ENCODE measurements at regions of chrX and their contacts with region 1.

Region 1: GRCh38 chrX:37825209-37825842 is 22.0 kb downstream of the DYNLT3 start:
- DNase-seq: peak; percentile 33
- H3K4me3 ChIP-seq: no peak overlapping the region
- H3K27ac ChIP-seq: no peak overlapping the region
- H3K4me1 ChIP-seq: no peaks in the 10 kb centered on the region
- H3K27me3 ChIP-seq: no peaks in the 10 kb centered on the region
- CTCF ChIP-seq: peak; percentile 59
- POLR2A ChIP-seq: no peak

Region 2: GRCh38 chrX:37302569-37302968 is 522.8 kb before region 1 on chrX:
- CTCF ChIA-PET with region 1: interaction called, 3 read pairs
- POLR2A ChIA-PET with region 1: no interaction called
- dilution Hi-C with region 1: no loop called
- intact Hi-C with region 1: loop called (anchors 1 kb)
- DNase-seq: peak; percentile 43
- H3K4me3 ChIP-seq: no peak overlapping the region
- H3K27ac ChIP-seq: no peak overlapping the region
- H3K4me1 ChIP-seq: no peaks in the 10 kb centered on the region
- H3K27me3 ChIP-seq: no peaks in the 10 kb centered on the region
- CTCF ChIP-seq: peak; percentile 32 to 47
- POLR2A ChIP-seq: no peak

Region 3: GRCh38 chrX:37578045-37578444 is 247.3 kb before region 1 on chrX:
- CTCF ChIA-PET with region 1: no interaction called
- POLR2A ChIA-PET with region 1: no interaction called
- dilution Hi-C with region 1: no loop called
- intact Hi-C with region 1: loop called (anchors 5 kb)
- DNase-seq: no peak
- H3K4me3 ChIP-seq: no peak overlapping the region
- H3K27ac ChIP-seq: no peak overlapping the region
- H3K4me1 ChIP-seq: no peaks in the 10 kb centered on the region
- H3K27me3 ChIP-seq: no peaks in the 10 kb centered on the region
- CTCF ChIP-seq: no peak
- POLR2A ChIP-seq: no peak